Activated T-helper 2 cell treated with anti-CD3 and anti-CD28 coated beads, Interferon-gamma antibody, Interleukin-2, Interleukin-4, amounts not matched to agents 10 μg/mL and 5 μg/mL and 100 μg/mL, durations not matched to agents 14 hours and 24 hours and 36 hours (primary cell): ENCODE measurements at regions of chr2 and their contacts with region 1.

Region 1: DNA sequence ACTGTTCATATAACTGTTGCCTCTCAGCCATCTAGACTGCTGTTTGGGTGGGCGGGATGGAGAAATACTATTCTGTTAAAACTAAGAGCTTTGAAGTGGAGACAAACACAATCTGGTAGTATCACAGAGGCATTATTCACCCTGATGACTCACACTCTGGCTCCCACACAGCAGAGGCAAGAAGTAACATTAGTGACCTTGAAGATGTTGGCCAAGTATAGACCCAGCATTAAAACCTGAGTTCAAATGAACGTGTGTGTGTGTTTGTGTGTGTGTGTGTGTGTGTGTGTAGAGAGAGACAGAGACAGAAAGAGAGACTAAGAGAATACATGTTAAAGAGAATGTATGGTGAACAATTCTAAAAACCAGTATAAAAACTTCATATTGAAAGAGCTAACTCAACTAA is 22.5 kb upstream of the ACVR1 start:
- DNase-seq: peak; percentile 44
- H3K4me3 Mint-ChIP-seq: peak overlapping the region; percentile 86
- H3K27ac Mint-ChIP-seq: peak overlapping the region; percentile 98
- H3K4me1 Mint-ChIP-seq: peaks cover 74% of the 10 kb centered on the region
- H3K27me3 Mint-ChIP-seq: no peaks in the 10 kb centered on the region

Region 2: DNA sequence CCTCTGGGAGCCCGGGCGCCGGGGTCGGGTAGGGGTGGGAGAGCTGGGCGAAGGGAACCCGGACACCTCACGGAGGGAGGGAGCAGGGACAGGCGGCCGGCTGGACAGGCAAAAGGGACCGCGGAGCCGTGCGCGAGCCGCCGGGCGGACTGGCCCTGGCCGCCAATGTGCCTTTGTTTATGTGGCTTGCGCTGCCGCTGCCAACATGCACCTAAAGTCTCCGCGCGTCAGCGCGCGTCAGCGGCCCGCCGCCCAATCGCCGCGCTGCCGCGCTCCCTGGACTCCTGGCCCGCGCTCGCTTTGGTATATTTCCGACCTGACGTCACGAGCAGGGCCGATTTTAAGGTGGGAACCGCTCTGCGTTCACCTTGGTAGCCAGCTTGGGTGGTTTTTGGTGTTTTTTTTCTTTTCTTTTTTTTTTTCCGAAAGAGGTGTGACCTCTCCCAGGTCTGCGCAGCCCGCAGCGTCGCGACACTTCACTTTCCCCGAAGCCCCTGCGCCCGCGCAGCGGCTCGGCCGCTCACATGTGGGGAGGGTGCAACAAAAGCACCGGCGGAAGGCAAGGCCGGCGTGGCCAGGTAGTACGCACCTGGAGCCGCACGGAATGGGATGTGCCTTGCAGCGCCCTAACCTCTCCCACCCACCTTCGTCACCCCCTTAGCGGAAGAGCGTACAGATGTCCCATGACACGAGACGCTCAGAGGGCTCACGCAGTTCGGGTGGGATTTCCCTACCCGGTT is 1565.9 kb before region 1 on chr2 and contains the start of gene NR4A2:
- intact Hi-C with region 1: loop called (anchors 10 kb)
- DNase-seq: peak; percentile 84
- H3K4me3 Mint-ChIP-seq: peak within 1 kb of the TSS; percentile 95
- H3K27ac Mint-ChIP-seq: peak within 1 kb of the TSS; percentile 99
- H3K4me1 Mint-ChIP-seq: peaks cover 51% of the 10 kb centered on the region
- H3K27me3 Mint-ChIP-seq: peaks cover 11% of the 10 kb centered on the region
- total RNA-seq, gene NR4A2: 22.1 and 24.0 TPM in 2 replicates

Region 3: DNA sequence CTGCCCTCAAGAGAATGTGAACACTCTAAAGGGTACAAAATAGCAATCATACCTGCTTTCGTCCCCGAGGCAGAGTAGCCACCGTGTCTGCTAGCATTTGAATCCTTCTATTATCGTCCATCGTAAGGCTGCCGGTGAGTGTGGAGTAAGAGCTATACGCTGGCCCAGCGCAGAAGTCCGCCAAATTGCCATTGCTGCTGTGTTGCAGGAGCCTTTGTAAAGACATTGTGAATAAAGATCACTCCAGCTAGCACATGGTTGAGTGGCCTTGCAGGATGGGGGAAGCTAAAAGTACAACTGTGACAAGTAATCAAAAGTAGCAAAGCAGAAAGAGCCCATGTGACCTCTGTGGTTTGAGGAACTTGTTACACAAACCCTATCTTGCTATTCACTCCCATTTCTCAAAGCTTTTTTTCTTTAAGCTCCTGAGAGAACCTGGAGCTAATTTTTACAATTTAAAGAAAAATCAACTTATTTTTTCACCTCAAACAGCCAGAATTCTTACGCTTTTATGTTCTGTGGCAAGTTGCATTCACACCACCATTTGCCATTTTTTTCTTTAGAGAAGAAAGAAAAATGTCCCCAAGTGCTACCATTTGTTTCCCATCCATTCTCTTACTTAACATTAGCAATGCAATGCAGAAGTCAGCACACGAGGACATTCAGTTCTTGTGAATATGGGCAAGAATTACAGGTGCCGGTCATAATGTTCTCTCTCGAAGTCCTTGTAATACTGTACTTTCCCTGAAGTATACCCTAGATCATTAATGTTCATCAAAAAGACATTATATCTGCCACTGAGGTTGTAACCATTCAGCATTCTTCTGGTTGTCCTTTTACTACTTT is 454.6 kb before region 1 on chr2 and contains the start of gene CYTIP:
- intact Hi-C with region 1: loop called (anchors 5 kb)
- DNase-seq: peak; percentile 72
- H3K4me3 Mint-ChIP-seq: peak within 1 kb of the TSS; percentile 98
- H3K27ac Mint-ChIP-seq: peak within 1 kb of the TSS; percentile 96
- H3K4me1 Mint-ChIP-seq: peaks cover 47% of the 10 kb centered on the region
- H3K27me3 Mint-ChIP-seq: no peaks in the 10 kb centered on the region
- total RNA-seq, gene CYTIP: 199 and 206 TPM in 2 replicates

Region 4: GRCh38 chr2:157628477-157629415 is 269.8 kb before region 1 on chr2 and contains the start of gene ACVR1C:
- intact Hi-C with region 1: loop called (anchors 5 kb)
- DNase-seq: peak; percentile 65
- H3K4me3 Mint-ChIP-seq: peak within 1 kb of the TSS; percentile 83
- H3K27ac Mint-ChIP-seq: no peak within 1 kb of the TSS
- H3K4me1 Mint-ChIP-seq: peaks cover 22% of the 10 kb centered on the region
- H3K27me3 Mint-ChIP-seq: peaks cover 15% of the 10 kb centered on the region
- total RNA-seq, gene ACVR1C: 0.57 and 0.94 TPM in 2 replicates

Region 5: DNA sequence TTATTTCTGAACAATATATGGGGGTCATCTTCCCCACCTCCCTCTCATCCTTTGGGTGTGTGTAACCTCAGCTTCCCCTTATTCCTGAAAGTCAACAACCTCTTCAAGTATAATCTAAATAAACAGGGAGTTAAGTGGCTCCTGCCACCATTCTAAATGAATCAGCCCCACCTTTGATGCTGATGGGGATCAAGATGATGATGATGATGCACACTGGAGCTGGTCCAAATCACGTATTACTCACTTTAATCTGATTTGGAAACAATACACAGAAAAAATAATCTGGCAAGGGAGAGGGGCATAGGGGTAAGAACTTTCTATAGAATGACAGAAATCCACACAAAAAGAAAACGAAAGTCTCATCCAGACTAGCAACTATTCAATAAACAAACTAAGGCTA is 29.6 kb before region 1 on chr2:
- intact Hi-C with region 1: loop called (anchors 1 kb)
- DNase-seq: no peak
- H3K4me3 Mint-ChIP-seq: no peak overlapping the region
- H3K27ac Mint-ChIP-seq: no peak overlapping the region
- H3K4me1 Mint-ChIP-seq: peaks cover 66% of the 10 kb centered on the region
- H3K27me3 Mint-ChIP-seq: no peaks in the 10 kb centered on the region

Region 6: GRCh38 chr2:158006961-158007719 is 108.5 kb after region 1 on chr2:
- intact Hi-C with region 1: loop called (anchors 2 kb)
- DNase-seq: no peak
- H3K4me3 Mint-ChIP-seq: no peak overlapping the region
- H3K27ac Mint-ChIP-seq: no peak overlapping the region
- H3K4me1 Mint-ChIP-seq: peaks cover 15% of the 10 kb centered on the region
- H3K27me3 Mint-ChIP-seq: no peaks in the 10 kb centered on the region